ENCODE measurements at regions of chr17 and their contacts with region 1.

Region 1: DNA sequence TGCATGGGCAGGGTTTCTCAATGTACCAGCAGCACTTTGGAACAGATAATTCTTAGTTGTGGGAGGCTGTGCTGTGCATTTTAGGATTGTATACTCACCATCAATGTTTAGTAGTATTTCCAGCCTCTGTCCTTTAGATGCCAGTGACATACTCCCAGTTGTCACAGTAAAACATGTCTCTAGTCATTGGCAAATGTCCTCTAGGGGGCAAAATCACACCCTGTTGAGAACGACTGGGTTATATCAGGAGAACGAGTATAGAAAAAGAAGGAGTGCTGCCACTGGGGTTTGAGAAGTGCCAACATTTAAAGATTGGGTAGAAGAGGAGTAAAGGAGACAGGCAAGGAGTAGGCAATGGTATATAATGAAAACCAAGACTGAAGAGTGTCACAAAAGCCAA is 37.9 kb upstream of the SMIM36 start:
- DNase-seq: peak; percentile 33
- ATAC-seq: peak; percentile 83
- H3K4me3 ChIP-seq: no peak overlapping the region
- H3K27ac ChIP-seq: no peak overlapping the region
- H3K4me1 ChIP-seq: no peaks in the 10 kb centered on the region
- H3K27me3 ChIP-seq: peaks cover 0 to 11% of the 10 kb centered on the region in 2 experiments; a peak in 3 of 5 replicates
- CTCF ChIP-seq: peak; percentile 48
- EP300 ChIP-seq: no peak
- POLR2A ChIP-seq: no peak
- RAD21 ChIP-seq: no peak

Region 2: DNA sequence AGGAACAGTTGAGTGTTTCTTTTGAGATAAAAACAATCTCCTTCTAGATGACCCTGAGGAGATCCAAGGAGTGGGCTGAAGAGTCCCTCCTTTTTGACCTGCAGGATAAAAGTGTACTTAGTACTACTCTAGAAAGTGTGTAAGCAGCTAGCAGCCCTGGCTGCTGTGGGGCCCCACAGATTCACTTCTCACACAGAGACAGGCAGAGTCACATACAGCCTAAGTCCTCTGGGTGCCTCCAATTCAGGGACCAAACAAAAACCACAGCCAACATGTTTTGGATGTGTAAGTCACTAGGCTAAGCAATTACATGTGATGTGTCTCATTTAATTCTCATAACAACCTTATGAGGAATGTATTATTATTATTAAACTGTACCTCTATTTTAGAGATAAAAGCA is 76.4 kb after region 1 on chr17:
- CTCF ChIA-PET with region 1: no interaction called
- POLR2A ChIA-PET with region 1: no interaction called
- in situ Hi-C with region 1: no loop called
- intact Hi-C with region 1: no loop called
- DNase-seq: no peak
- ATAC-seq: no peak
- H3K4me3 ChIP-seq: no peak overlapping the region
- H3K27ac ChIP-seq: no peak overlapping the region
- H3K4me1 ChIP-seq: no peaks in the 10 kb centered on the region
- H3K27me3 ChIP-seq: no peaks in the 10 kb centered on the region
- CTCF ChIP-seq: no peak
- EP300 ChIP-seq: no peak
- POLR2A ChIP-seq: no peak
- RAD21 ChIP-seq: no peak

Region 3: GRCh38 chr17:55717898-55718735 is 169.0 kb after region 1 on chr17:
- CTCF ChIA-PET with region 1: no interaction called
- POLR2A ChIA-PET with region 1: no interaction called
- in situ Hi-C with region 1: no loop called
- intact Hi-C with region 1: loop called (anchors 1 kb)
- DNase-seq: peak; percentile 78
- ATAC-seq: peak; percentile 86
- H3K4me3 ChIP-seq: no peak overlapping the region
- H3K27ac ChIP-seq: no peak overlapping the region
- H3K4me1 ChIP-seq: no peaks in the 10 kb centered on the region
- H3K27me3 ChIP-seq: peaks cover 0 to 41% of the 10 kb centered on the region in 2 experiments; a peak in 3 of 5 replicates
- CTCF ChIP-seq: peak; percentile 74
- EP300 ChIP-seq: no peak
- POLR2A ChIP-seq: no peak
- RAD21 ChIP-seq: 0 out of 2 replicates have a peak, but pooled peaks have one; percentile 24

Measured in HepG2 (cell line).